ENCODE measurements at regions of chr1 and their contacts with region 1.

Region 1: DNA sequence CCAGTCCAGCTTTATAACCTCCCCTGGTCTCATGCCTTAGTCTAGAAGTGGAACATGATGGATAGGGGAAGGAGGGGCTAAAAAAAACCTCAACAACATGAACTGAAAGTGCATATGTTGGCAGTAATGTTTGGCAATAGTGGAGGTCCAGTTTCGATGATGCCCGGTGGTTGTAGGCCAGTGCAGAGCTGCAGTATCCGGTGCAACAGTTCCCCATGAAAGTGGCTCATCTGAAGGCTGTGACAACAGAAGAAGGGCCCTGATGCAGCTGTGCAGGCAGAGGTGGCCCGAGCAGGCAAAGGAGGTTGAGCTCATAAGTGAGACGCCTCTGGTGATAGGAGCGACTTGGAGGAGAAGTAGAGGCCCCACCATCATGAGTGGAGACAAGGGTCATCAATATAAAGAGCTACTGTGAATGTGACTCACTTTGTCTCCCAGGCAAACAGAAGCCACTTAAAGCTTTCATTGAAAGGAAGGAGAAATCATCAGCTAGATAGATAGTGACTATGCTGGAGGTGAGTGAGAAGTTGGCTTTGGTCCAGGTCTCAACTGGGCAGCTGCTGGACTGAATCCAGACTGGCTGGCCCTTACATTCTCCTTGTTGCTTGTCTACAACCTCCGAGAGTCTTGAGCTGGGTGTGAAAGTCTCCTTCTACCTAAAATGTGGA is 10.2 kb upstream of the CREG1 start:
- DNase-seq: no peak
- H3K4me3 ChIP-seq: no peak overlapping the region
- CTCF ChIP-seq: no peak

Region 2: DNA sequence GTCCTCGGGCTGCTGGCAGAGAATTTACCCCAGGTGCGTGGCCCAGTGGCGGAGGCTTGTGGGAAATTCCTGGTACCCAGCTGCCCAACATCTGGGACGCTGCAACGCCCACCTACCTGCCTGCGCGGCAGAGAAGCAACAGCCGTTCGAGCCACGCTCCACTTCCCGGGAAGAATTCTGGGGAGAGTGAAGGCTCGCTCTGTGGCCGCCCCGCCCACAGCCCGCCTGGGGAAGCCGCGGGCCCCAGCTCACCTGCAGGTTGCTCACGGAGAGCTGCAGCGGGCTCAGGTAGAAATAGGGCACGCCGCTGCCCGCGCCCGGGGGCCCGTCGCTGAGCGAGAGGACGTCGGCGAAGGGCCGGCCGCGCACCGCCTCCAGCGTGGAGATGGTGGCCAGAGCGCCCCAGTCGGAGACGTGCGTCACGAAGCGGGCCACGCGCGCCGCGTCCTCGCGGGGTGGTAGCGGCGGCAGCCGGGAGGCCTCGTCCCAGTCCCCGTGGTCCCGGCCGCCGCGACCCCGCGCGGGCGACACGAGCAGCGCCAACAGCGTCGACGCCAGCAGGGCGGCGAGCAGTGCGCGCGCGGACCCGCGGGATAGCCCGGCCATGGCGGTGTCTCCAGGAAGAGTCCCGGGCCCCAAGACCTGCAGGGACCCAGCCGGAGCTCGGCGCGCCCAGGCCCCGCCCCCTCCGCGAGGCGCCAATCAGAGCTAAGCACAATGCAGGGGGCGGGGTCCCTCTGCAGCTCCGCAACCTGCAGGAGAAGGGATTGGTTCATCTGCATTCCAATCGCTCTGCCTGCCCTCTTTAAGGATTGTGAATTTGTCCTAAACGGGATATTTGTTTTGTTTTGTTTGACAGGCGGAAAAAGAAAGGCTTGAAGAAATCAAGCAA is 10.3 kb before region 1 on chr1 and contains the start of gene CREG1:
- CTCF ChIA-PET with region 1: interaction called, 103 read pairs
- POLR2A ChIA-PET with region 1: no interaction called
- DNase-seq: no peak
- H3K4me3 ChIP-seq: peak within 1 kb of the TSS; percentile 59
- CTCF ChIP-seq: no peak

Measured in AG04449 (cell line).